ENCODE measurements at regions of chr3 and their contacts with region 1.

Region 1: DNA sequence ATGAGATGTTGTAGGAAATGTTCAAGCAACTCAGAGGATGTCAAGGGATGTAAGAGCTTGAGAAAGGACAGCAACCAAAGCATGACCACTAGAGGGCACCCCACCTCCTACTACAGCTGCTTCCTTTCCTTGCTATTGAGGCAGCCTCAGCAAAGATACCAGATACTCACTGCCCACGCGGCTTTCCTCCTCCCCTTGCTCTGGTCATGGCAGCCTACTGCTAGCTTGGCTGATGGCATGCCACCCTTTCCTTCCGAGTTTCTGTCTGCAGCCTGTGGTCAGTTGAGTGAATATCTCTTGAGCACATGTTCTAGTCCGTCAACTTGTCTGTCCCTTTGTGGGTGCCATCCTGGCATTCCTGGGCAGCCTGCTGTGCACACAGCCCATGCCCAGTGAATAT is 4.4 kb upstream of the CXCR6 start:
- DNase-seq: peak; percentile 61 to 95 (median 79)
- ATAC-seq: peak; percentile 56 to 75 (median 64)
- H3K4me3 ChIP-seq: no peak overlapping the region
- H3K4me3 Mint-ChIP-seq: no peak overlapping the region
- H3K27ac ChIP-seq: no peak overlapping the region
- H3K27ac Mint-ChIP-seq: no peak overlapping the region
- H3K4me1 ChIP-seq: peaks cover 6 to 31% of the 10 kb centered on the region in 2 experiments
- H3K4me1 Mint-ChIP-seq: peaks cover 34 to 47% (median 38%) of the 10 kb centered on the region in 3 donors
- H3K27me3 ChIP-seq: no peaks in the 10 kb centered on the region
- H3K27me3 Mint-ChIP-seq: no peaks in the 10 kb centered on the region

Region 2: DNA sequence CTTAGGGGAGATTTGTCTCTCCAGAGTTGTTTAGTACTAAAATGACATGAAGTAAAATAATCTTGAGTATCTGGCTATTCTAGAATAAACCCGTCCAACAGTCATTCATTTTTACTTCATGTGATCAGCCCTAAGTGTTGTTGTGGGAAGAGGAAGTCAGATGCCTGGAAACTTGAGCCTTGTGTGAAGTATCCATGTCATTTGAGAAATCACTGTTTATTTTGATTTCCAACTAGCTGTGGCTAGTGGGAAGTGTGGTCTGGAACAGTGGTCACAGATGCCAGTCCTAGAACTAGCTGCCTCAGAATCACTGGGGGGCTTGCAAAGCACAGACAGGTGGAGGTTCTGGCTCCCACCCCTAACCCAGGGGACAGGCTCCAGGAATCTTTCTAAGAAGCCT is 422.0 kb before region 1 on chr3:
- CTCF ChIA-PET with region 1: no interaction called
- POLR2A ChIA-PET with region 1: no interaction called
- DNase-seq: no peak
- ATAC-seq: no peak
- H3K4me3 ChIP-seq: no peak overlapping the region
- H3K4me3 Mint-ChIP-seq: no peak overlapping the region
- H3K27ac ChIP-seq: no peak overlapping the region
- H3K27ac Mint-ChIP-seq: no peak overlapping the region
- H3K4me1 ChIP-seq: peaks cover 0 to 2% of the 10 kb centered on the region in 2 experiments
- H3K4me1 Mint-ChIP-seq: no peaks in the 10 kb centered on the region
- H3K27me3 ChIP-seq: no peaks in the 10 kb centered on the region
- H3K27me3 Mint-ChIP-seq: no peaks in the 10 kb centered on the region

Region 3: GRCh38 chr3:45994419-45995235 is 55.8 kb after region 1 on chr3:
- CTCF ChIA-PET with region 1: interaction called, 3 to 10 read pairs
- POLR2A ChIA-PET with region 1: no interaction called
- DNase-seq: peak; percentile 17 to 82 (median 47)
- ATAC-seq: peak; percentile 6 to 32 (median 18)
- H3K4me3 ChIP-seq: peak overlapping the region; percentile 72 to 95
- H3K4me3 Mint-ChIP-seq: peak overlapping the region; percentile 82 to 90 (median 84)
- H3K27ac ChIP-seq: peak overlapping the region; percentile 95
- H3K27ac Mint-ChIP-seq: peak overlapping the region; percentile 90 to 93
- H3K4me1 ChIP-seq: peaks cover 15 to 62% of the 10 kb centered on the region in 2 experiments
- H3K4me1 Mint-ChIP-seq: peaks cover 39 to 57% (median 56%) of the 10 kb centered on the region in 3 donors
- H3K27me3 ChIP-seq: peaks cover 0 to 6% of the 10 kb centered on the region in 2 experiments
- H3K27me3 Mint-ChIP-seq: peaks cover 1% of the 10 kb centered on the region in 2 donors

Region 4: GRCh38 chr3:46078712-46079400 is 140.0 kb after region 1 on chr3:
- CTCF ChIA-PET with region 1: interaction called, 41 to 97 read pairs
- POLR2A ChIA-PET with region 1: no interaction called
- DNase-seq: peak; percentile 58 to 96 (median 85)
- ATAC-seq: peak; percentile 97 to 99 (median 97)
- H3K4me3 ChIP-seq: no peak overlapping the region
- H3K4me3 Mint-ChIP-seq: no peak overlapping the region
- H3K27ac ChIP-seq: no peak overlapping the region
- H3K27ac Mint-ChIP-seq: no peak overlapping the region
- H3K4me1 ChIP-seq: peaks cover 2 to 6% of the 10 kb centered on the region in 2 experiments
- H3K4me1 Mint-ChIP-seq: peaks cover 10 to 12% (median 10%) of the 10 kb centered on the region in 3 donors
- H3K27me3 ChIP-seq: no peaks in the 10 kb centered on the region
- H3K27me3 Mint-ChIP-seq: no peaks in the 10 kb centered on the region

Region 5: DNA sequence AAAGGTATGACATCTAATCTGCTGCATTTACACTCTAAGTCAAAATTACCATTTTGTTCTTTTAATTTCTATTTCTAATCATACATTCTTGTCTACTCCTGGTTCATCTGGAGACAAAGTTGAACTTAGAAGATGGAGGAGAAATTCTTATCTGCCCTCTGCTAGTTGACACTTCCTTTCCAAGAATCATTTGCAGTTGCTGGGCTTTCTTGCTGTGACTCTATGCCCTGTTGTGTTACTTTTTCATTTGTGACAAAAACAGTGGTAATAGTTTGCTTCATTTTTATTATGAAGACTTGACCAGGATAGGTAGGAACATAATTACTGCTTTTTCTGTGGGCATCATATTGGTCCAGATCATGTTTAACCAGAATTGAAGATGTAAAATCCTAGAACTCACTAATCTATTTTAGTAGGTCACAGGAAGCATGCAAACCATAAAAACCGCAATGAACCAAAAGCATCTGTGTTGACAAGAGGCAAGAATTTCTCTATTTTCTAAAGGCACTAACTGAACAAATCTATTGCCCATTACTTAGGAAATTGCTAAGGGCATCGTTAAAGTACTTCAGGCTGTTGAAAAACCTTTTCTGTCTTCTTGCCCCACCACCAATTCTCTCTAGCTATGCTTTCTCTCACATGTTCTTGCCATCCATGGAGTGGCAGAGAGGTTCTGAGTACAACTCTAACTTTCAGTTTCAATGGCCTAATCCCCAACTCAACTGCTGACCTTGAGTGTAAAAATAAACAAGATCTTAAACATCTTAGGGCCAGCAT is 410.8 kb after region 1 on chr3:
- CTCF ChIA-PET with region 1: no interaction called
- POLR2A ChIA-PET with region 1: no interaction called
- DNase-seq: peak in 1 of 35 experiments; percentile 56
- ATAC-seq: peak; percentile 44 to 59 (median 50)
- H3K4me3 ChIP-seq: peak overlapping the region; percentile 0 to 2
- H3K4me3 Mint-ChIP-seq: peak overlapping the region; percentile 37 to 55 (median 53)
- H3K27ac ChIP-seq: peak overlapping the region; percentile 69
- H3K27ac Mint-ChIP-seq: peak overlapping the region; percentile 79 to 84
- H3K4me1 ChIP-seq: peaks cover 34 to 42% of the 10 kb centered on the region in 2 experiments
- H3K4me1 Mint-ChIP-seq: peaks cover 61 to 67% (median 65%) of the 10 kb centered on the region in 3 donors
- H3K27me3 ChIP-seq: no peaks in the 10 kb centered on the region
- H3K27me3 Mint-ChIP-seq: peaks cover 0 to 2% of the 10 kb centered on the region in 2 donors

Region 6: GRCh38 chr3:46378426-46378942 is 439.6 kb after region 1 on chr3:
- CTCF ChIA-PET with region 1: interaction called in 1 of 2 experiments, 10 read pairs
- POLR2A ChIA-PET with region 1: no interaction called
- DNase-seq: peak; percentile 20 to 74 (median 53)
- ATAC-seq: peak in 2 of 4 experiments; percentile 43 to 54
- H3K4me3 ChIP-seq: no peak overlapping the region
- H3K4me3 Mint-ChIP-seq: no peak overlapping the region
- H3K27ac ChIP-seq: no peak overlapping the region
- H3K27ac Mint-ChIP-seq: no peak overlapping the region
- H3K4me1 ChIP-seq: peaks cover 14 to 38% of the 10 kb centered on the region in 2 experiments
- H3K4me1 Mint-ChIP-seq: peaks cover 41 to 53% (median 50%) of the 10 kb centered on the region in 3 donors
- H3K27me3 ChIP-seq: no peaks in the 10 kb centered on the region
- H3K27me3 Mint-ChIP-seq: no peaks in the 10 kb centered on the region